HepG2 (cell line): ENCODE measurements at regions of chr10 and their contacts with region 1.

Region 1: GRCh38 chr10:104291439-104291951 is 22.5 kb downstream of the GSTO2 start:
- DNase-seq: peak; percentile 78
- ATAC-seq: peak; percentile 82
- H3K4me3 ChIP-seq: peak overlapping the region in 2 of 3 experiments; percentile 15 to 31; a peak in 2 of 6 replicates
- H3K27ac ChIP-seq: no peak overlapping the region
- H3K4me1 ChIP-seq: peaks cover 49% of the 10 kb centered on the region
- H3K27me3 ChIP-seq: peaks cover 0 to 11% of the 10 kb centered on the region in 2 experiments; a peak in 2 of 5 replicates
- CTCF ChIP-seq: peak; percentile 98
- EP300 ChIP-seq: 0 out of 4 replicates have a peak, but pooled peaks of 1 of the 2 experiments have one; percentile 6
- POLR2A ChIP-seq: no peak
- RAD21 ChIP-seq: peak; percentile 89

Region 2: GRCh38 chr10:104274762-104275721 is 16.5 kb before region 1 on chr10:
- CTCF ChIA-PET with region 1: interaction called, 27 read pairs
- POLR2A ChIA-PET with region 1: interaction called, 23 read pairs
- in situ Hi-C with region 1: no loop called
- intact Hi-C with region 1: loop called (anchors 2 kb)
- DNase-seq: no peak
- ATAC-seq: peak; percentile 83
- H3K4me3 ChIP-seq: peak overlapping the region; percentile 28 to 45 (median 28); a peak in 1 of 6 replicates
- H3K27ac ChIP-seq: no peak overlapping the region
- H3K4me1 ChIP-seq: peaks cover 66% of the 10 kb centered on the region
- H3K27me3 ChIP-seq: no peaks in the 10 kb centered on the region
- CTCF ChIP-seq: peak; percentile 90
- EP300 ChIP-seq: no peak
- POLR2A ChIP-seq: no peak
- RAD21 ChIP-seq: peak; percentile 84

Region 3: DNA sequence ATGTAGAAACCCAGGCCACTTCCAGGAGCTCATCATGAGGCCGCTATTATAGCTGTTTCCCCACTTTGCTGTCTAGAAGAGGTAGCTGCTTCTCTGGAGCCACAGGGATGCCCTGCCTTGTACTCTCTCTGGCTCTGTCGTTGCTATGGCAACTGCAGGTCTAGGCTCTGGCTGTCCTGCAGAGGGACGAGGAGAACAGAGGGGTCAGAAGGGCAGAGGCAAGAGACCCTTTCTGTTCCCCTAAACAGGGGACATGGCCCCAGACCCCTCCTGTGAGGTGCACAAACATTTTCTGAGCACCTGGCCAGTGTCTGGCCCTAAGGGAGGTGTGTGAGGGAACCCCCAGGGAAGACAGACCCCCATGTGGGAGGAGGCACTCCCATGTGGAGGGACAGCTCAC is 15.4 kb after region 1 on chr10:
- CTCF ChIA-PET with region 1: interaction called, 4 read pairs
- POLR2A ChIA-PET with region 1: no interaction called
- in situ Hi-C with region 1: no loop called
- intact Hi-C with region 1: loop called (anchors 2 kb)
- DNase-seq: no peak
- ATAC-seq: no peak
- H3K4me3 ChIP-seq: no peak overlapping the region
- H3K27ac ChIP-seq: no peak overlapping the region
- H3K4me1 ChIP-seq: peaks cover 24% of the 10 kb centered on the region
- H3K27me3 ChIP-seq: no peaks in the 10 kb centered on the region; a peak in 1 of 5 replicates
- CTCF ChIP-seq: no peak
- EP300 ChIP-seq: no peak
- POLR2A ChIP-seq: no peak
- RAD21 ChIP-seq: no peak